Heart right ventricle (tissue), 16 donors: ENCODE measurements at regions of chr12 and their contacts with region 1.

Region 1: DNA sequence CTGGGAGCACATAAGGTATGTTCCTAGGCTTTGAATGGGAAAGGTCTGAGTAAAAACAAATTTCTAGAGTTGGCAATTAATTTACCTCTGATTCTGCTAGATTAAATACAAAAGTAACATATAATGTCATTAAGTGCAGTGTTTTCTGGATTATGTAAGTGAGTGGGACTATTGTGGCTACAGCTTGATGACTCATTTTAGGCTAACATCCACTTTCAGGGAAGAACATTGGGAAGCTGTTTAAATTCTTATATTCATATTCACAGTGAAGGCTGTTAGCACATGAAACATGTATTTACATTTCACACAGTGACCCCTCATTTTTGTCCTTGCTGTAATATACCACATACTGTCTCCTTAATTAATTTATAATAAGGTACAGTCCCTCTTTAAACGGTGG is 13.2 kb upstream of the BMAL2 start:
- DNase-seq: no peak
- ATAC-seq: no peak
- H3K4me3 ChIP-seq: no peak overlapping the region
- H3K27ac ChIP-seq: no peak overlapping the region
- H3K4me1 ChIP-seq: no peaks in the 10 kb centered on the region
- H3K27me3 ChIP-seq: no peaks in the 10 kb centered on the region
- CTCF ChIP-seq: no peak

Region 2: GRCh38 chr12:27024291-27024690 is 295.1 kb before region 1 on chr12:
- intact Hi-C with region 1: loop called in 1 of 10 experiments (anchors 10 kb)
- DNase-seq: no peak
- ATAC-seq: no peak
- H3K4me3 ChIP-seq: peak overlapping the region in 2 of 10 donors; percentile 62 to 79
- H3K27ac ChIP-seq: no peak overlapping the region
- H3K4me1 ChIP-seq: peaks cover 6 to 34% (median 18%) of the 10 kb centered on the region in 9 donors
- H3K27me3 ChIP-seq: no peaks in the 10 kb centered on the region
- CTCF ChIP-seq: no peak

Region 3: DNA sequence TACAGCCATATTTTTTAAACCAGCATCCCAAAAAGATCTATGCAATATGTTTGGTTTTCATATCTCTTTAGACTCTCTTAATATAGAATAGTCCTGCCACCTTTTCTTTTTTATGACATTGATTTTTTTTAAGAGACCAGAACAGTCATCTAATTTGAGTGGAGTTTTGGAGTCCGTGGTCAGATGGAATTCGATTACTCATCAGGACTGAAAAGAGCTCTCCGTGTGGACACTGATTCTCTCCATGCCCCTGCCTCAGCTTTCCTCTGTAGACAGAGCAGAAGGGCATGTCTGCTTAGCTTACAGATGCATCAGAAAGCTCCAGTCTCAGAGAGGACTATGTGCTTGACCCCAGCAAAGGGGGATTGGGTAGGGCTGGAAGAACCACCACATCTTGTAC is 154.9 kb after region 1 on chr12:
- intact Hi-C with region 1: no loop called
- DNase-seq: no peak
- ATAC-seq: peak in 4 of 8 donors; percentile 22 to 59 (median 46)
- H3K4me3 ChIP-seq: no peak overlapping the region
- H3K27ac ChIP-seq: peak overlapping the region in 4 of 10 donors; percentile 5 to 48 (median 26)
- H3K4me1 ChIP-seq: peaks cover 0 to 22% (median 12%) of the 10 kb centered on the region in 9 donors
- H3K27me3 ChIP-seq: no peaks in the 10 kb centered on the region
- CTCF ChIP-seq: no peak

Region 4: GRCh38 chr12:27667540-27667939 is 348.1 kb after region 1 on chr12:
- intact Hi-C with region 1: loop called in 2 of 10 experiments (anchors 10 kb)
- DNase-seq: no peak
- ATAC-seq: peak in 6 of 8 donors; percentile 25 to 94 (median 65)
- H3K4me3 ChIP-seq: no peak overlapping the region
- H3K27ac ChIP-seq: peak overlapping the region in 3 of 10 donors; percentile 1 to 30 (median 9)
- H3K4me1 ChIP-seq: peaks cover 0 to 18% (median 10%) of the 10 kb centered on the region in 9 donors
- H3K27me3 ChIP-seq: no peaks in the 10 kb centered on the region
- CTCF ChIP-seq: no peak

Region 5: DNA sequence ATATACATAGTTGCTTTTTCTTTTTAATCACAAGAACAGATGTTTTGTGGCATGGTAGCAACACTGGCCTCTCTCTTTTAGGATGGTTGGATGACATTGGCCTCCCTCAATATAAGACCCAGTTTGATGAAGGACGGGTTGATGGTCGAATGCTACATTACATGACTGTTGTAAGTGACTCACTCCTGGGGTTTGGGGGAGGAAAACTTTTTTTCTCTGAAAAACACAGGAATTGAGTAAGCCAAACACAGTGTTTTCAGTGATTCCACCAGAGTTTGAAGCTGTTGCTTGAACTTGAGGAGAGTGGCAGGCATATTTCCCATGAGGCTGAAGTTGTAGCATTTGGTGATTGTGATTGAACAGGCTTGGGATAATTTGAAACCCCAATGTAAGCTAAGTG is 363.1 kb after region 1 on chr12:
- intact Hi-C with region 1: loop called in 1 of 10 experiments (anchors 10 kb)
- DNase-seq: no peak
- ATAC-seq: no peak
- H3K4me3 ChIP-seq: no peak overlapping the region
- H3K27ac ChIP-seq: no peak overlapping the region
- H3K4me1 ChIP-seq: no peaks in the 10 kb centered on the region
- H3K27me3 ChIP-seq: no peaks in the 10 kb centered on the region
- CTCF ChIP-seq: no peak